T-cell (primary cell): ENCODE measurements at regions of chr12 and their contacts with region 1.

Region 1: DNA sequence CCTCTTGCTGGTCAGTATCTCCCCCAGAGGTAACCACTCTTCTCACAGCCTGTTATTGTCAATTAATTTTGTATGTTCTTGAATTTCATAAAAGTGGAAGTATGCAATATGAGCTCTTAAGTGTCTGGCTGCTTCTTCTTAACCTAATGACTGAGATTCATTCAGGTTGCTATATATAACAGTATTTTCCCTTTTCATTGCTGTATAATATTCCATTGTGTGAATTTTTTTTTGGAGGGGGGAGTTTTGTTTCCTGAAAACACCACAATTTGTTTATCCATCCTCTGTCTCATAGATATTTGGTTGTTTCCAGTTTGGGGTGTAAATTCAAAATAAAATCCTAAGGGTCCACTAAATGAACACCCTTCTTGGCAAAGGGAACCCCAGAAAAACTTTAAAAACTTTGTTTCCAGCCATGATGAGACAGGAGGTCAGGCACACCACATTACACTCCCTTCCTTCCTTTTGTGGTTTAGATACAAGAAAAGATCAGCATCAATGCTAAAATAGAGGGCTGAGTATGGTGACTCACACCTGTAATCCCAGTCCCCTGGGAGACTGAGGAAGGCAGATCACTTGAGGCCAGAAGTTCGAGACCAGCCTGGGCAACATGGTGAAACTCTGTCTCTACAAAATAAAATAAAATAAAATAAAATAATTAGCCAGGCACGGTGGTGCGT is 4.1 kb upstream of the DAO start:
- DNase-seq: no peak
- ATAC-seq: no peak
- H3K4me3 ChIP-seq: no peak overlapping the region
- H3K4me3 Mint-ChIP-seq: no peak overlapping the region
- H3K27ac ChIP-seq: no peak overlapping the region
- H3K27ac Mint-ChIP-seq: no peak overlapping the region
- H3K4me1 ChIP-seq: no peaks in the 10 kb centered on the region
- H3K4me1 Mint-ChIP-seq: peaks cover 0 to 2% (median 0%) of the 10 kb centered on the region in 3 donors
- H3K27me3 ChIP-seq: peaks cover 0 to 13% of the 10 kb centered on the region in 2 experiments
- H3K27me3 Mint-ChIP-seq: no peaks in the 10 kb centered on the region

Region 2: GRCh38 chr12:108798551-108799221 is 77.1 kb before region 1 on chr12:
- CTCF ChIA-PET with region 1: no interaction called
- POLR2A ChIA-PET with region 1: no interaction called
- DNase-seq: no peak
- ATAC-seq: no peak
- H3K4me3 ChIP-seq: no peak overlapping the region
- H3K4me3 Mint-ChIP-seq: no peak overlapping the region
- H3K27ac ChIP-seq: no peak overlapping the region
- H3K27ac Mint-ChIP-seq: no peak overlapping the region
- H3K4me1 ChIP-seq: peaks cover 0 to 2% of the 10 kb centered on the region in 2 experiments
- H3K4me1 Mint-ChIP-seq: peaks cover 4% of the 10 kb centered on the region in 3 donors
- H3K27me3 ChIP-seq: no peaks in the 10 kb centered on the region
- H3K27me3 Mint-ChIP-seq: no peaks in the 10 kb centered on the region

Region 3: DNA sequence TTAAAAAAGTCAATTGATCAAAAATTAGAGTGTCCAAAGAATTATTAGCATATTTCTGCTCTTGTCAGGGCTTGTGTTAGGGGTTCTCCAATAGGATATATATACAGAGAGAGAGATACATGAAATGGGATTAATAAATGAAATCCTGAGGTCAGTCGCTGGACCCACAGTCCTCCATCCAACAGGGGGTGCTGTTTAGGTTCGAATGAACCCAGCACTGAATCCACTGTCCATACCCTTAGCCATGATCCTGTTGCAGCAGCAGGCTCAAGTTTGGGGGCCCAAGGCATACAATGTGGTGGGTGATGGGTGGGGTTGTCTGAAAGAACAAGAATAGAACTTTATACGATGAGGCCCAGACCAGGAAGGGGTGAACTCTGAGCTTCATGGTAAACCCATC is 471.1 kb after region 1 on chr12:
- CTCF ChIA-PET with region 1: no interaction called
- POLR2A ChIA-PET with region 1: no interaction called
- DNase-seq: no peak
- ATAC-seq: no peak
- H3K4me3 ChIP-seq: no peak overlapping the region
- H3K4me3 Mint-ChIP-seq: no peak overlapping the region
- H3K27ac ChIP-seq: no peak overlapping the region
- H3K27ac Mint-ChIP-seq: no peak overlapping the region
- H3K4me1 ChIP-seq: no peaks in the 10 kb centered on the region
- H3K4me1 Mint-ChIP-seq: no peaks in the 10 kb centered on the region
- H3K27me3 ChIP-seq: peaks cover 0 to 3% of the 10 kb centered on the region in 2 experiments
- H3K27me3 Mint-ChIP-seq: peaks cover 5 to 17% of the 10 kb centered on the region in 2 donors

Region 4: DNA sequence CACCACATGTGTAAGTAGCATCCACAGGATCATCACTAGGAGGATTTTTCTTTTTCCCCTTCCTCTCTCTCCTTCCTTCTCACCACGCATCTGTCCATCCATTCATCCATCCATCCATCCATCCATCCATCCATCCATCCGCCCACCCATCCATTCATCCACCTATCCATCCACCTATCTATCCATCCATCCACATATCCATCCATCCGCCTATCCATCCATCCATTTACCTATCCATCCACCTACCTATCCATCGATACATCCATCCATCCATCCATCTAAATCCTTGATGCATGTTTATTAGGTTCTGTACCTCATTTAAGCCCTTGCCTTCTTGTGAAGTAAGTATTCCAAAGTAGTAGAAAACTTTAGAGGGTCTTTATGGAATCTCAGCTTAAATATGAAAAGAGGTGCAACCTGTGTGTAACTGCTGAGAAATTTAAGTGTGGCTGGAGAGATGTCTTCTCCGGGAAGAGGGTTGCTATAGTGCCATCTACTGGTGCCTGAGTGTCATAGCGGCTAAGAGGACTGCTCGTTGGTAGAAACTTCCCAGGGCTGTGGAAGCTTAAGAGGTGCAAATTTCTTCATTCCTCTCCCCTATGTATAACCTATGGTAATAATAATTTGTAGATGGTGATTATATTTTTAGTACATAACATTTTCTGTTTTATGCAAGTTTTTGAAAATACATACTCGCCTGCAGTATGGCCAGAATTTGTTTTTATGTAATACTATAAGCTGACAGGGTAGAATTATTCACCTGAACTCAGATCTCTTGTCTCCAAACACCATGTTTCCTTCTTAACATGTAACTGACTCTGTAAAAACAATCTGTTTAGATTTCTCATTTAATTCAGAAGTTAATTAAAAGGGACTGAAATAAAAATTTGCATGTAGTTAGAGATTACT is 517.9 kb after region 1 on chr12:
- CTCF ChIA-PET with region 1: interaction called in 1 of 2 experiments, 10 read pairs
- POLR2A ChIA-PET with region 1: no interaction called
- DNase-seq: peak in 26 of 35 experiments; percentile 1 to 69 (median 14)
- ATAC-seq: peak; percentile 42 to 72 (median 56)
- H3K4me3 ChIP-seq: no peak overlapping the region
- H3K4me3 Mint-ChIP-seq: no peak overlapping the region
- H3K27ac ChIP-seq: no peak overlapping the region
- H3K27ac Mint-ChIP-seq: no peak overlapping the region
- H3K4me1 ChIP-seq: no peaks in the 10 kb centered on the region
- H3K4me1 Mint-ChIP-seq: no peaks in the 10 kb centered on the region
- H3K27me3 ChIP-seq: peaks cover 0 to 20% of the 10 kb centered on the region in 2 experiments
- H3K27me3 Mint-ChIP-seq: peaks cover 22 to 23% of the 10 kb centered on the region in 2 donors